ENCODE measurements at regions of chr2 and their contacts with region 1.

Region 1: GRCh38 chr2:117771969-117772630 is 42.4 kb upstream of the DDX18 start:
- DNase-seq: peak; percentile 46
- H3K4me3 ChIP-seq: no peak overlapping the region
- H3K27ac ChIP-seq: peak overlapping the region in 1 of 2 experiments; percentile 92; a peak in 2 of 4 replicates
- H3K4me1 ChIP-seq: peaks cover 0 to 12% of the 10 kb centered on the region in 2 experiments; a peak in 2 of 4 replicates
- H3K27me3 ChIP-seq: no peaks in the 10 kb centered on the region
- CTCF ChIP-seq: peak; percentile 60
- EP300 ChIP-seq: no peak
- RAD21 ChIP-seq: peak; percentile 82

Region 2: GRCh38 chr2:117470311-117471095 is 301.6 kb before region 1 on chr2:
- CTCF ChIA-PET with region 1: interaction called, 38 read pairs
- POLR2A ChIA-PET with region 1: no interaction called
- DNase-seq: peak; percentile 43
- H3K4me3 ChIP-seq: no peak overlapping the region; a peak in 1 of 4 replicates
- H3K27ac ChIP-seq: peak overlapping the region in 1 of 2 experiments; percentile 82; a peak in 2 of 4 replicates
- H3K4me1 ChIP-seq: peaks cover 0 to 3% of the 10 kb centered on the region in 2 experiments; a peak in 1 of 4 replicates
- H3K27me3 ChIP-seq: no peaks in the 10 kb centered on the region
- CTCF ChIP-seq: peak; percentile 40
- EP300 ChIP-seq: peak in 1 of 2 experiments; percentile 77; a peak in 2 of 4 replicates
- RAD21 ChIP-seq: peak; percentile 89

Region 3: GRCh38 chr2:117661619-117662018 is 110.5 kb before region 1 on chr2:
- CTCF ChIA-PET with region 1: interaction called, 11 read pairs
- POLR2A ChIA-PET with region 1: interaction called, 5 read pairs
- DNase-seq: peak; percentile 71
- H3K4me3 ChIP-seq: no peak overlapping the region
- H3K27ac ChIP-seq: peak overlapping the region in 1 of 2 experiments; percentile 98; a peak in 2 of 4 replicates
- H3K4me1 ChIP-seq: peaks cover 0 to 33% of the 10 kb centered on the region in 2 experiments; a peak in 2 of 4 replicates
- H3K27me3 ChIP-seq: no peaks in the 10 kb centered on the region
- CTCF ChIP-seq: no peak
- EP300 ChIP-seq: peak; percentile 46 to 99; a peak in 3 of 4 replicates
- RAD21 ChIP-seq: peak; percentile 26

Region 4: GRCh38 chr2:117692001-117692763 is 79.9 kb before region 1 on chr2:
- CTCF ChIA-PET with region 1: interaction called, 12 read pairs
- POLR2A ChIA-PET with region 1: no interaction called
- DNase-seq: no peak
- H3K4me3 ChIP-seq: no peak overlapping the region
- H3K27ac ChIP-seq: peak overlapping the region in 1 of 2 experiments; percentile 99; a peak in 2 of 4 replicates
- H3K4me1 ChIP-seq: peaks cover 0 to 37% of the 10 kb centered on the region in 2 experiments; a peak in 2 of 4 replicates
- H3K27me3 ChIP-seq: no peaks in the 10 kb centered on the region
- CTCF ChIP-seq: no peak
- EP300 ChIP-seq: no peak
- RAD21 ChIP-seq: no peak

Region 5: DNA sequence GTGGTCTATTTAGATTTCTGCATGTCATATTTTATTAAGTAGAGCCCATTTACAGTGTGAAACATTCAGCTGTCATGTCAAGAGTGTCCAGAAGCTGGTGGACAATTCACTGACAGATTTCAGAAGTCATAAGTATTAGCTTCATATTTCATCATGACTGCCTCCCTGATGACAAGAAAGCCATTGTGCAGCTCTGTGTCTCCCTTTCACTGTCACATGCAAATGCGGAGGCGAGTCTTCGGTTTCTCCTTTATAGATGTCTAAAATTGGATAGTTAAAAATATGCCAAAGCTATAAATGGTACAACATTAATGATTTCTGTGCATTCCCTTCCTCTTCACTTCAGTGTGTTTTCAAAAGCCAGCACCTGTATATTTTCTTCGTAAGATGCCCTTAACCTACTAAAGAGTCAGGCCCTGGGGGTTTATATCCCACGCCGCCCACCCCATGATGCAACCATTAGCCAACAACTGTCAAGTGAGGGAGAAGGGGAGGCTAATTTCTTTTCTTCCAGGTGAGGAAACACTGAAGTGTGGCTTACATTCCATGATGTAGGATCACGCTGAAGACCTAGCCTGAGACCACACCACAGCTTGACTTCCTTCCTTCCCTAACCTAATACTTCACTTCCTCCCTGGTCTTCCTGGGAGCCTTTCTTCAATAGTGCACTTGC is 57.2 kb before region 1 on chr2:
- CTCF ChIA-PET with region 1: interaction called, 11 read pairs
- POLR2A ChIA-PET with region 1: interaction called, 5 read pairs
- DNase-seq: no peak
- H3K4me3 ChIP-seq: no peak overlapping the region
- H3K27ac ChIP-seq: peak overlapping the region in 1 of 2 experiments; percentile 97; a peak in 2 of 4 replicates
- H3K4me1 ChIP-seq: peaks cover 0 to 45% of the 10 kb centered on the region in 2 experiments; a peak in 2 of 4 replicates
- H3K27me3 ChIP-seq: no peaks in the 10 kb centered on the region
- CTCF ChIP-seq: no peak
- EP300 ChIP-seq: no peak
- RAD21 ChIP-seq: no peak

Region 6: DNA sequence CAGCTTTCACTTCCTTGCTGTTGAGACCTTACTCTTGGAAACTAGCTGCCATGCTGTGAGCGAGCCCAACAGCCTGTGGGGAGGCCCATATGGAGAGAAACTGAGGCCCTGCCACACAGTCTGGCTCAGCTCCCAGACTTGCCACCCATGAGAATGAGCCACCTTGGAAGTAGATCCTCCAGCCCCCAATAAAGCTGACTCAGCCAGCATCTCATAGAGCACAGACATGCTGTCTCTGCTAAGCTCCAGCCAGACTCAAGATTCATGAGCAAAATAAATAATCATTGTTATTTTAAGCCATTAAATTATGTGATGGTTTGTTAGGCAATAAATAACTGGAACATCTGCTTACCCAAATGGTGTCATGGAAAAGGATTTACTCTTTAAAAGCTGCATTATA is 11.2 kb before region 1 on chr2:
- CTCF ChIA-PET with region 1: interaction called, 11 read pairs
- POLR2A ChIA-PET with region 1: no interaction called
- DNase-seq: no peak
- H3K4me3 ChIP-seq: no peak overlapping the region
- H3K27ac ChIP-seq: no peak overlapping the region
- H3K4me1 ChIP-seq: no peaks in the 10 kb centered on the region; a peak in 1 of 4 replicates
- H3K27me3 ChIP-seq: no peaks in the 10 kb centered on the region
- CTCF ChIP-seq: no peak
- EP300 ChIP-seq: no peak
- RAD21 ChIP-seq: no peak

Region 7: GRCh38 chr2:118970396-118971135 is 1198.5 kb after region 1 on chr2:
- CTCF ChIA-PET with region 1: no interaction called
- POLR2A ChIA-PET with region 1: no interaction called
- DNase-seq: no peak
- H3K4me3 ChIP-seq: no peak overlapping the region
- H3K27ac ChIP-seq: no peak overlapping the region
- H3K4me1 ChIP-seq: no peaks in the 10 kb centered on the region
- H3K27me3 ChIP-seq: no peaks in the 10 kb centered on the region; the same call in 1 of the 2 replicates
- CTCF ChIP-seq: no peak
- EP300 ChIP-seq: no peak
- RAD21 ChIP-seq: no peak